Activated T-helper 2 cell treated with anti-CD3 and anti-CD28 coated beads, Interferon-gamma antibody, Interleukin-2, Interleukin-4, amounts not matched to agents 10 μg/mL and 5 μg/mL and 100 μg/mL, durations not matched to agents 14 hours and 24 hours and 36 hours (primary cell): ENCODE measurements at regions of chr14 and their contacts with region 1.

Region 1: DNA sequence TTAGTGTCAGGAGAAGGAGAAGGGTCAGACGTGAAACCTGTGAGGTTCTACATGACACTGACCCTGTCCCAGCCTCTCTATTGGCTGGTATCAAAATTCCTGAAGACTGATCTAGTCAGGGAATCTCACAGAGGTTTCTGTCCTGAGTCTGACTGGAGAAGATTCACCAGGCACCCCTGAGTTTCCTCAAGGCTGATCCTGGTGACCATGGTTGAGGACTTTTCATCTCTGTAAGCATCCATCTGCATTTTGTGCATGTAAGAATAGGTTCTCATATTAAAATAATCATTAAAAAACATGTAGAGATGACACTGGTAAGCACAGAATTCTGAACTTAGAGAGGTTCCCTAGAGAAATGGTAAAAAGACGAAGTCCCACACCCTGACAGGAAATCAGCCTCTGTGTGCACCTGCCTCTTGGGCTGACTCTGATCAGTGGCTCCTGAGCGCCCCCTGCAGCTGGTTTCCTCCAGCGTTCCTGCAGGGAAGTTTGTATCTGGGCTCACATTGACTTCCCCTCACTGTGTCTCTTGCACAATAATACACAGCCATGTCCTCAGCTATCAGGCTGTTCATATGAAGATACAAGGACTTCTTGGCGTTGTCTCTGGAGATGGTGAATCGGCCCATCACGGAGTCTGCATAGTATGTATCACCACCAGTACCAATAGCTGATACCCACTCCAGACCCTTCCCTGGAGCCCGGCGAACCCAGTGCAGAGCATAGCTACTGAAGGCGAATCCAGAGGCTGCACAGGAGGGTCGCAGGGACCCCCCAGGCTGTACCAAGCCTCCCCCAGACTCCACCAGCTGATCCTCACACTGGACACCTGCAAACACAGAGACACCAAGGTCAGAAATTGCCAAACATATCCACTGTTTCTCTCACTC is 991.9 kb downstream of the TMEM121 start:
- DNase-seq: peak; percentile 65
- H3K4me3 Mint-ChIP-seq: no peak overlapping the region
- H3K27ac Mint-ChIP-seq: no peak overlapping the region
- H3K4me1 Mint-ChIP-seq: peaks cover 3% of the 10 kb centered on the region
- H3K27me3 Mint-ChIP-seq: peaks cover 51% of the 10 kb centered on the region

Region 2: DNA sequence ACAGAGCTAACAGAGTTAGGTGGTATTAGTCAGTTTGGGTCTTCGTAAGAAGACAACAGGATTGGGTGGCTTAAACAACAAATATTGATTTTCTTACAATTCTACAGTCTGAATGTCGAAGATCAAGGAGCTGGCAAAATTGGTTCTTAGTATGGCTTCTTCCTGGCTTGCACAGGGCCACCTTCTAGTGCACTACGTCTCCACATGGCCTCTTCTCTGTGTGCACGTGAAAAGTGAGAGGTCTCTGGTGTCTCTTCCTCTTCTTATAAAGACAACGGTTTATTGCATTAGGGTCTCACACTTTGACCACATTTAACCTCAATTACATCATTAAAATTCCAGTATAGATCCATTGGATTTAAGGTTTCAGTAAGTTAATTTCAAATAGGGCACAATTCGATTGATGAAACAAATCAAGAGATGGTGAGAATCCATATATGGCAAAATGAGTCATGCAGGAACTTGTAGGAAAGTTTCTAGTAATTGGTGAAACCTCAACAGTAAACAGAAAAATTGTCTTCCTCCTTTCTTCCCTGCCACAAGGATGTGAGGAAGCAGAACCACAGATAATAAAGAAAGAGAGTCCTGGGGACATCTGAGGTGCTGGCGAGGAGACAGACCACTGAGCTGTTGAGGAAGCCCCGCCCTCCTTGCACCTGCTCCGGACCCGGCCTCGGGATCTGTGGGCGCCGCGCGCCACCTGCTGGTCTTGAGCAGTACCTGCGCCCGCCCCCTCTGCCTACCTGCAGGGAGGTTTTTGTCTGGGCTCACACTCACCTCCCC is 145.2 kb before region 1 on chr14:
- intact Hi-C with region 1: no loop called
- DNase-seq: peak; percentile 70
- H3K4me3 Mint-ChIP-seq: peak overlapping the region; percentile 60
- H3K27ac Mint-ChIP-seq: no peak overlapping the region
- H3K4me1 Mint-ChIP-seq: peaks cover 17% of the 10 kb centered on the region
- H3K27me3 Mint-ChIP-seq: peaks cover 28% of the 10 kb centered on the region

Region 3: GRCh38 chr14:106459971-106460730 is 58.1 kb before region 1 on chr14:
- intact Hi-C with region 1: loop called (anchors 1 kb)
- DNase-seq: peak; percentile 39
- H3K4me3 Mint-ChIP-seq: no peak overlapping the region
- H3K27ac Mint-ChIP-seq: no peak overlapping the region
- H3K4me1 Mint-ChIP-seq: no peaks in the 10 kb centered on the region
- H3K27me3 Mint-ChIP-seq: peaks cover 26% of the 10 kb centered on the region